ENCODE measurements at regions of chr1 and their contacts with region 1.

Region 1: GRCh38 chr1:202315576-202316168 is 26.1 kb downstream of the UBE2T start:
- DNase-seq: peak; percentile 49 to 90
- H3K4me3 ChIP-seq: no peak overlapping the region
- H3K27ac ChIP-seq: no peak overlapping the region
- H3K4me1 ChIP-seq: peaks cover 0 to 6% (median 1%) of the 10 kb centered on the region in 4 experiments; a peak in 3 of 7 replicates
- H3K27me3 ChIP-seq: no peaks in the 10 kb centered on the region; a peak in 1 of 7 replicates
- CTCF ChIP-seq: peak; percentile 98
- EP300 ChIP-seq: no peak
- POLR2A ChIP-seq: no peak
- RAD21 ChIP-seq: peak; percentile 97 to 98

Region 2: DNA sequence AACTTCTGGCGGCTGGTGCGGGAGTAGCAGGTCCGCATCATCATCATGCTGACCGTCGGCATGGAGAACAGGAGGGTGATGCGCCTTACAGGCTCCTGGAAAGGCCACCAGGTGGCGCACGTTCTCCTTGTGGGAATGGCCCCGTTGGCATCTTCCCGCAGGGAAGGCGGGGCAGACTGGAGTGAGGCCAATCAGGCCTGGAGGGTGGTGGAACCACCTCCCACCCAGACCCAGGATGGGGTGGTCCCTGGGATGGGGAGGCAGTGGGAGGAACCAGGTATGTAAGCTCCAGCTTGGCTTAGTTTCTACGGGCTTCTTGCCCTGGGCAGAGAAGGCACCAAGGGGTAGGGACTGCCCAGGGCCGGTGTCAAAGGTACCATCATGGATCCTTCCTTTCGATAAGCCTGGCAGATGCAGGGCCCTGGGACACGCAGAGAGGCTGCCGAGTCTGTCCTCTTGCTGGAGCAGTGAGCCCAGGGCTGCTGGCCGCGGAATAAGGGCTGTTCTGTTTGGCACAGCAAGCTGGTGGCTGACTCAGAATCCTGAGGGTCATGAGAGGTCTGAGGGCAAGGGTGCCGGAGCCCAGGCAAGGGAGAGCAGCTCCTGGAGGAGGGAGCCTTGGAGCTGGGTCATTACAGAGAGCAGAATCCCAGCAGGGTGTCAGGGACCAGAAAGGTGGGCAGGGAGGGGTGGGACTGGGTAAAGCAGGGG is 130.8 kb before region 1 on chr1:
- CTCF ChIA-PET with region 1: interaction called, 107 read pairs
- POLR2A ChIA-PET with region 1: no interaction called
- DNase-seq: peak; percentile 97 to 99
- H3K4me3 ChIP-seq: no peak overlapping the region
- H3K27ac ChIP-seq: no peak overlapping the region
- H3K4me1 ChIP-seq: peaks cover 0 to 6% (median 4%) of the 10 kb centered on the region in 4 experiments; a peak in 5 of 7 replicates
- H3K27me3 ChIP-seq: no peaks in the 10 kb centered on the region; a peak in 3 of 7 replicates
- CTCF ChIP-seq: peak; percentile 89 to 99 (median 97)
- EP300 ChIP-seq: no peak
- POLR2A ChIP-seq: no peak
- RAD21 ChIP-seq: peak; percentile 79 to 84

Region 3: GRCh38 chr1:202207292-202207691 is 108.4 kb before region 1 on chr1:
- CTCF ChIA-PET with region 1: interaction called, 138 read pairs
- POLR2A ChIA-PET with region 1: no interaction called
- DNase-seq: no peak
- H3K4me3 ChIP-seq: no peak overlapping the region
- H3K27ac ChIP-seq: no peak overlapping the region
- H3K4me1 ChIP-seq: peaks cover 0 to 2% (median 0%) of the 10 kb centered on the region in 4 experiments; a peak in 1 of 7 replicates
- H3K27me3 ChIP-seq: peaks cover 0 to 2% (median 0%) of the 10 kb centered on the region in 4 experiments; a peak in 1 of 7 replicates
- CTCF ChIP-seq: peak; percentile 48 to 59 (median 51)
- EP300 ChIP-seq: no peak
- POLR2A ChIP-seq: no peak
- RAD21 ChIP-seq: peak; percentile 32 to 48; a peak in 3 of 4 replicates

Region 4: DNA sequence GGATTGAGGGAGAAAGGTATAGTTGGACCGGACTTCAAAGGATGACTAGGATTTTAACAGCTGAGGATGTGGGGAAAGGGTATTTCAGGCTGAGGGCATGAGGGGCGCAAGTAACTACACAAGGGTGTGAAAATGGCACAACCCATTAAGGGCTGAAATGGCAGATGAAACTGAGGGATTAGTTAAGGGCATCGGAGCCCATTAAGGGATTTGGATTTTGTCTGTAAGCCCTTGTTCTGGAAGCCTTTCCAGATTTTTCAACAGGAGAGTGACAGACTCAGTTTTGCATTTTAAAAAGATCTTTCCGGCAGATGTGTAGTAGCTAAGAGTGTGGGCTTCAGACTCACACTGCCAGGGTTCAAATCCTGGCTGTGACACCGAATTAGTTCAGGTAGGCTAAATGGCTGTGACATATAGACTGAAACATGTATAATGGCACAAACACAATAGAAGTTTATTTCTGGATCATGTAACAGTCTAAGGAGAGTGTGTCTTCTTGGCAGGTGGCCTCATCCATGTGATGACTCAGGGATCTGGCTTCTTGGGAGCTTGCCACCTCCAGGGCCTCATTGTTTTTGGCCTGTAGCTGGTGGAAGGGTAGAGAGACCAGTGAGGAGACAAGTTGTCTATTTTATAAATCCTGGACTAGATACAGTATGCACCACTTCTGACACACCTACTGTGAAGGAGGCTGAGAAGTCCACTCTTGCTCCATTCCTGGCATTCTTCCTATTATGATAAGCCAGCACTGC is 23.5 kb before region 1 on chr1:
- CTCF ChIA-PET with region 1: interaction called, 23 read pairs
- POLR2A ChIA-PET with region 1: no interaction called
- DNase-seq: no peak
- H3K4me3 ChIP-seq: no peak overlapping the region
- H3K27ac ChIP-seq: no peak overlapping the region
- H3K4me1 ChIP-seq: no peaks in the 10 kb centered on the region
- H3K27me3 ChIP-seq: no peaks in the 10 kb centered on the region
- CTCF ChIP-seq: no peak
- EP300 ChIP-seq: no peak
- POLR2A ChIP-seq: no peak
- RAD21 ChIP-seq: no peak

Region 5: GRCh38 chr1:202329891-202330290 is 14.2 kb after region 1 on chr1:
- CTCF ChIA-PET with region 1: interaction called, 21 read pairs
- POLR2A ChIA-PET with region 1: interaction called, 5 read pairs
- DNase-seq: no peak
- H3K4me3 ChIP-seq: no peak overlapping the region
- H3K27ac ChIP-seq: no peak overlapping the region
- H3K4me1 ChIP-seq: no peaks in the 10 kb centered on the region; a peak in 1 of 7 replicates
- H3K27me3 ChIP-seq: no peaks in the 10 kb centered on the region
- CTCF ChIP-seq: peak in 2 of 3 experiments; percentile 35 to 63; a peak in 3 of 4 replicates
- EP300 ChIP-seq: no peak
- POLR2A ChIP-seq: no peak
- RAD21 ChIP-seq: peak; percentile 43 to 62

Region 6: GRCh38 chr1:202438432-202439174 is 122.9 kb after region 1 on chr1:
- CTCF ChIA-PET with region 1: no interaction called
- POLR2A ChIA-PET with region 1: no interaction called
- DNase-seq: no peak
- H3K4me3 ChIP-seq: no peak overlapping the region
- H3K27ac ChIP-seq: no peak overlapping the region
- H3K4me1 ChIP-seq: no peaks in the 10 kb centered on the region; a peak in 1 of 7 replicates
- H3K27me3 ChIP-seq: no peaks in the 10 kb centered on the region
- CTCF ChIP-seq: no peak
- EP300 ChIP-seq: no peak
- POLR2A ChIP-seq: no peak
- RAD21 ChIP-seq: no peak

Region 7: GRCh38 chr1:202516434-202516877 is 200.8 kb after region 1 on chr1:
- CTCF ChIA-PET with region 1: no interaction called
- POLR2A ChIA-PET with region 1: no interaction called
- DNase-seq: no peak
- H3K4me3 ChIP-seq: no peak overlapping the region
- H3K27ac ChIP-seq: no peak overlapping the region
- H3K4me1 ChIP-seq: no peaks in the 10 kb centered on the region
- H3K27me3 ChIP-seq: no peaks in the 10 kb centered on the region
- CTCF ChIP-seq: no peak
- EP300 ChIP-seq: no peak
- POLR2A ChIP-seq: no peak
- RAD21 ChIP-seq: no peak